ENCODE measurements at regions of chr9 and their contacts with region 1.

Region 1: DNA sequence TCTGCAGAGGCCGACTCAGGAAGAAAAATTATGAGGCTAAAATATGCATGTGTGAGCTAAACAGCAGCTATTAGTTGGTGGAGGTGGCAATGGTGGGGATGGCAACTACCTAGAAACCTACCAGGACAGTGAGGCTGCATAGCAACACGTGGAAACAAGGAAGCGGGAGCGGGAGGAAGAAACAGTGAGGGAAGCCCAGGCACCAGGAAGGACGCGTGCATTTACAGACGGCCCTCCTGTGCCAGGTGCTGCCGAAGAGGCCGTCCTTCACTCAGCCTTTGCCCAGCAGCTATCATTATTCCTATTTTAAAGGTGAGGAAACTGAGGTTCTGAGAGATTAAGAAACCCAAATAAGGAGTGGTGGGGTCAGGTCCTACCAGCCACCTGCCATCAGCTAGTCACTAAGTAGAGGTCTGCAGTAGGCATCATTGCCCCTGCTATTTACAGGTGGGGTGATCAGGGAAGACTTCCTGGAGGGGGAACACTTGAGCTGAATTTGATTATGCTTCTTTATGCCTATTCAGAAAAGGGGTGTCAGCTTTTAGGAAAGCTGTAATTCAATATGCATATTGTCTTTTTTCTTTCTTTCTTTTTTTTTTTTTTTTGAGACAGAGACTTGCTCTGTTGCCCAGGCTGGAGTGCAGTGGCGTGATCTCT is 125.3 kb downstream of the CRB2 start:
- DNase-seq: no peak
- ATAC-seq: no peak
- H3K4me3 ChIP-seq: no peak overlapping the region
- H3K27ac ChIP-seq: no peak overlapping the region
- H3K4me1 ChIP-seq: no peaks in the 10 kb centered on the region
- H3K27me3 ChIP-seq: no peaks in the 10 kb centered on the region
- CTCF ChIP-seq: no peak
- POLR2A ChIP-seq: no peak
- RAD21 ChIP-seq: no peak

Region 2: DNA sequence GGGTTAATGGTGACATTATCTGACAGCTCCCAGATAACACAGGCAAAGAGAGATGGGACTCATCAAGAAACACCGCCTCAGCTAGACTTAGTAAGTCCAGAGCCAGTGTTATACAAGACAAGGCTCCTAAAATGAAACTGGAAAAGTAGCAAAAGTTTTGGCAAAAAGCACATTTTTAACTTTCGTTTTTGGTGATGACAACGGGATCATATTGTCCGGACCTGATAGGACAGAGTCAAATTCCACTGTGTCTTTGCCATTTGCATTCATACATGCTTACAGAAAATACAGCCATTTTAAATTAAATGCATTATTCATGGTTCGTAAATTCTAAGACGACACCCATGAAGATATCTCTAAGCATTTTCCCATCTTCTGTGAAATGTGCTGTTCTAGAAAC is 26.7 kb after region 1 on chr9:
- CTCF ChIA-PET with region 1: interaction called, 11 read pairs
- POLR2A ChIA-PET with region 1: no interaction called
- dilution Hi-C with region 1: no loop called
- in situ Hi-C with region 1: no loop called
- intact Hi-C with region 1: no loop called
- DNase-seq: peak; percentile 21
- ATAC-seq: peak; percentile 61
- H3K4me3 ChIP-seq: peak overlapping the region; percentile 13; the same call in 1 of the 2 replicates
- H3K27ac ChIP-seq: no peak overlapping the region
- H3K4me1 ChIP-seq: no peaks in the 10 kb centered on the region; the same call in 1 of the 2 replicates
- H3K27me3 ChIP-seq: no peaks in the 10 kb centered on the region
- CTCF ChIP-seq: no peak
- POLR2A ChIP-seq: no peak
- RAD21 ChIP-seq: no peak

Measured in IMR-90 (cell line).